IMR-90 (cell line): ENCODE measurements at regions of chr20 and their contacts with region 1.

Region 1: DNA sequence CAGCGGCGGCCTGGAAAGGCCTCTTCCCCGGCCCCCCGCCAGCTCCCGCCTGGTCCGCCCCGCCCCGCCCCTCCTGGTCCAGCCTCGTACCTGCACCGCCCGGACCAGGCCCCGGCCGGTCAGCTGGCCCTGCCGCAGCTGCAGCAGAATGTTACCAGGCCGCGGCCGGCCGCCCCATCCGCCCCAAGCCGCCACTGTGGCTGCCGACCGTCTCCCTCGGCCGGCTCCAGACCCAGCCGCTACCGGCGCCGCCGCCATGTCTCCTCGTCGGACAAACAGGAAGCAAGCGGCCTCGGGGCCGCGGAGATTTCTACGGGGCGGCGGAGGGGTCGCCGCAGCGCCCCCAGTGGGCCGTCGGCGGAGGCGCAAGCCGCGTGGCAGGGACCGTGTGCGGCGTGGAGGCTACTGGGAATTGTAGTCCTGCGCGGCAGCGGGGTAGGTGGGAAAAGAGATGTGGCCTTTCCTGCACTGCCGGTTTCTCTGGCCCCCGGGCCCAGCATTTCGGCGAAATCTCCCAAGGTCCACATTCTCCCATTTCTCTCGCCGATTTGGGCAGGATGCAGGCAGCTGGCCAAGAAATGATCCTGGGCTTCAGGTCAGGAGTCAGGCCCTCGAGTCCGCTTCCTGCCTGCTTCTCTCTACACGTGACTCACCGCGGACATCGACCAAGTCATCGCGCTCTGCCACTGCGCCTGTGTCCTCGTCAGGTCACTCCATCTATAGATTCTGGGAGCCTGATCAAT is at the start of gene TRPC4AP:
- DNase-seq: peak; percentile 86
- ATAC-seq: peak; percentile 95
- H3K4me3 ChIP-seq: peak within 1 kb of the TSS; percentile 87
- H3K27ac ChIP-seq: peak within 1 kb of the TSS; percentile 96
- H3K4me1 ChIP-seq: peaks cover 9% of the 10 kb centered on the region
- H3K27me3 ChIP-seq: no peaks in the 10 kb centered on the region
- CTCF ChIP-seq: peak; percentile 98
- POLR2A ChIP-seq: peak; percentile 90
- RAD21 ChIP-seq: peak; percentile 52
- total RNA-seq, gene TRPC4AP: 39.4 and 41.0 TPM in 2 replicates

Region 2: DNA sequence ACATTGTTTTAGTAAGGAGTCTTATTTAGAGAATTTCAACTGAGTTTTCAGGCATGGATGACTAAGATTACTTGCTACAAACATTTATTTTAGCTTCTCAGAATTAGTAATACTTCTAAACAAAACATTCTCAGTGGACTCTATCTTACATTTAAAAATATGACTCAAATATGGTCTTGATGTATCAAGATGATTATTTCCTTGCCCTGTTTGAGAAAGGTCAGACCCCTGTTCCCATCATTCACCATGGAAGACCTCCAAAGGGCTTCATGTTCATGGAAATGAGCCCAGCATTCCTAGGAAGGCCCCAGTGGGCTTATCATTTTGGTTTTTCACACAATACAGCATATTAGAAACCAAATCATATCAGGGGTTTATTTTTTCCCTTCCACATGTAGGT is 24.5 kb after region 1 on chr20:
- CTCF ChIA-PET with region 1: interaction called, 11 read pairs
- POLR2A ChIA-PET with region 1: no interaction called
- dilution Hi-C with region 1: no loop called
- in situ Hi-C with region 1: no loop called
- intact Hi-C with region 1: no loop called
- DNase-seq: peak; percentile 74
- ATAC-seq: peak; percentile 64
- H3K4me3 ChIP-seq: no peak overlapping the region
- H3K27ac ChIP-seq: peak overlapping the region; percentile 66
- H3K4me1 ChIP-seq: peaks cover 32% of the 10 kb centered on the region
- H3K27me3 ChIP-seq: no peaks in the 10 kb centered on the region
- CTCF ChIP-seq: no peak
- POLR2A ChIP-seq: no peak
- RAD21 ChIP-seq: no peak

Region 3: DNA sequence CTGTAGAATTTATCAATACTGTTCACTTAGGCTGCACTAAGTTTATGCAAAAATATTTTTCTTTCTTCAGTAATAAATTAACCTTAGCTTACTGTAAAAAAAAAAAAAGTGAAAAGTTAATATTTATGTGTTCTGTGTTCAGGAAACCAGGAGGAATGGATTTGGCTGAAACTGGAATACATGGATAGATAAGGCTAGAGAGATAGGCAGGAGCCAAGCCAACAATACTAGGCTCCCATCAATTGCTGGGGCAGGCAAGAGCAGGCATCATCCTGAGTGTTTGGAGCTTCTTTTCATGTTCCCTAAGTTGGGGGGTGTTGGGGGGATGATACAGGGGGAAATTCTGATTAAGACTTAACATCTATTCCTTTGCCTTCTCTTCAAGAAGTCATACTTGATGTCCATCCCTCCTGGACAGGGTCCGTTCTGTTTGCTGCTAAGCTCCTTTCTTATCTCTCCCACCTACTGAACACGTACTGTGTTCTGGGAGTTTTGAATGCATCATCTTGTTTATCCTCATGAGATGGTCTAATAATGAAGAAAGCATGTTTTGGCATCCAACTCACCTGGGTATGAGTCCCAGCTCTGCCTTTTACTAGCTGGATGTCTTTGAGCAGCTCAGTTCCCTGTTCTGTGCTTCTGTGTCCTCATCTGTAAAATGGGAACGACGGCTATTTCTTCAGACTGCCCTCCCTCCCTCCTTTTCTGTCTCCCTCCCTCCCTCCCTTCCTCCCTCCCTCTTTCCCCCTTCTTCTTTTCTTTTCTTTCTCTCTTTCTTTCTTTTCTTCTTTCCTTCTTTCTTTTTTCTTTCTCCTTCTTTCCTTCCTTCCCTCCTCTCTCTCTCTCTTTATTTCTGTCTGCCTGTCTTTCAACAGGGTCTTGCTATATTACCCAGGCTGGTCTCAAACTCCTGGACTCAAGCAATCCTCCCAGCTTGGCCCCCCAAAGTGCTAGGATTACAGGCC is 72.8 kb after region 1 on chr20:
- CTCF ChIA-PET with region 1: no interaction called
- POLR2A ChIA-PET with region 1: interaction called, 27 read pairs
- dilution Hi-C with region 1: no loop called
- in situ Hi-C with region 1: no loop called
- intact Hi-C with region 1: no loop called
- DNase-seq: no peak
- ATAC-seq: no peak
- H3K4me3 ChIP-seq: no peak overlapping the region
- H3K27ac ChIP-seq: no peak overlapping the region
- H3K4me1 ChIP-seq: peaks cover 4% of the 10 kb centered on the region
- H3K27me3 ChIP-seq: no peaks in the 10 kb centered on the region
- CTCF ChIP-seq: no peak
- POLR2A ChIP-seq: no peak
- RAD21 ChIP-seq: no peak

Region 4: GRCh38 chr20:35216541-35216940 is 123.8 kb after region 1 on chr20:
- CTCF ChIA-PET with region 1: interaction called, 14 read pairs
- POLR2A ChIA-PET with region 1: no interaction called
- dilution Hi-C with region 1: no loop called
- in situ Hi-C with region 1: no loop called
- intact Hi-C with region 1: no loop called
- DNase-seq: no peak
- ATAC-seq: no peak
- H3K4me3 ChIP-seq: no peak overlapping the region
- H3K27ac ChIP-seq: no peak overlapping the region
- H3K4me1 ChIP-seq: peaks cover 6% of the 10 kb centered on the region
- H3K27me3 ChIP-seq: no peaks in the 10 kb centered on the region
- CTCF ChIP-seq: no peak
- POLR2A ChIP-seq: no peak
- RAD21 ChIP-seq: no peak